ENCODE measurements at regions of chr22 and their contacts with region 1.

Region 1: GRCh38 chr22:45163451-45164269 is at the start of gene NUP50:
- DNase-seq: peak; percentile 98
- H3K4me3 ChIP-seq: peak within 1 kb of the TSS; percentile 77 to 98 (median 89)
- H3K27ac ChIP-seq: peak within 1 kb of the TSS; percentile 84 to 92 (median 88)
- H3K4me1 ChIP-seq: peaks cover 25 to 59% (median 49%) of the 10 kb centered on the region in 4 donors
- H3K27me3 ChIP-seq: no peaks in the 10 kb centered on the region
- CTCF ChIP-seq: peak in 1 of 3 experiments; percentile 8
- EP300 ChIP-seq: no peak
- POLR2A ChIP-seq: peak; percentile 47
- total RNA-seq, gene NUP50: 22.7 to 40.3 (median 30.0) TPM

Region 2: GRCh38 chr22:45009881-45010531 is 153.7 kb before region 1 on chr22 and contains the start of gene PHF21B:
- intact Hi-C with region 1: loop called (anchors 5 kb)
- DNase-seq: no peak
- H3K4me3 ChIP-seq: peak within 1 kb of the TSS; percentile 55 to 80 (median 66)
- H3K27ac ChIP-seq: peak within 1 kb of the TSS in 3 of 4 donors; percentile 46 to 66 (median 51)
- H3K4me1 ChIP-seq: peaks cover 19 to 55% (median 50%) of the 10 kb centered on the region in 4 donors
- H3K27me3 ChIP-seq: peaks cover 0 to 86% (median 28%) of the 10 kb centered on the region in 4 donors
- CTCF ChIP-seq: no peak
- EP300 ChIP-seq: no peak
- POLR2A ChIP-seq: no peak
- total RNA-seq, gene PHF21B: 0.50 to 9.4 (median 1.8) TPM in 3 of 4 donors, not detected in the other

Region 3: DNA sequence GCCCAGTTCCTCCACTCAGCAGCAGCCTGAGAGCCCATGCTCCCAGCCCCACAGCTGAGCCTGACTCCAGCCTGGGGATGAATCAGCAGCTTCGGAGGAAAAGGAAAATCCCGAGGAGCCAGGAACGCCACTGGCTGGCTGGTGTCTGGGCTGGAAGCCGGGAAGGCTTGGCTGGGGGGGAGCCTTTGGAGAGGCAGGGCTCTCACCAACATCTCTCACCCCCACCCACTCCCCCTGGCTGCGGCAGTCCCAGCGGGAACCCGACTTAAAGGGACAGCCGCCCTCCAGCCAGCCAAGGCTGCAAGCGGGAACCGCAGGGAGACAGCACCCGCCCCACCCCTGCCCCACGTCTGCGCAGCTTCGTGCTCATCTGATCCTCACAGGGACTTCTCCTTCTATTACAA is 48.6 kb after region 1 on chr22:
- intact Hi-C with region 1: loop called (anchors 10 kb)
- DNase-seq: no peak
- H3K4me3 ChIP-seq: peak overlapping the region; percentile 41 to 58 (median 52)
- H3K27ac ChIP-seq: peak overlapping the region; percentile 63 to 81 (median 70)
- H3K4me1 ChIP-seq: peaks cover 26 to 63% (median 61%) of the 10 kb centered on the region in 4 donors
- H3K27me3 ChIP-seq: no peaks in the 10 kb centered on the region
- CTCF ChIP-seq: peak in 2 of 3 experiments; percentile 17 to 29
- EP300 ChIP-seq: no peak
- POLR2A ChIP-seq: no peak